ENCODE measurements at regions of chr7 and their contacts with region 1.

Region 1: DNA sequence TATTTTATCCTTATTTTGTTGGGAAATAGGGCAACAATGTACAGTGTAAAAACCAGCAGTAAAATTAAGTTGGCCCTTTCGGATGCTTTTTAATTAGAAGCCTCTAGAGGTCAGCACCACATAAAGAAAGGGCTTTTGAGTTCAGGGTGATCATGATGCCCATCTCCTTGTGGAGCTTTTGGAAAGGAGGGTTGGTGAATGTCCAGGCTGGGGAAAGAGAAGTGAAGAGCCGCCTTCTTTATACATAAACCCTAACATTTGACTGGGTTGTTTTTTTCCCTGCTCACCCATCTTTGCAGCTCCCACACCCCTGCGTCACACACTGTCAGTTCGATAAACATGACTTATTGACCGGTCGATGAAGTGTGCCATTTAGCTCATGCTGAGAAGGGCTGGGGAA is 29.8 kb downstream of the MTURN start:
- DNase-seq: peak in 1 of 2 donors; percentile 77
- H3K4me3 ChIP-seq: no peak overlapping the region
- H3K27ac ChIP-seq: peak overlapping the region in 2 of 5 donors; percentile 44 to 66
- H3K4me1 ChIP-seq: peaks cover 23 to 61% (median 48%) of the 10 kb centered on the region in 4 donors
- H3K27me3 ChIP-seq: no peaks in the 10 kb centered on the region
- CTCF ChIP-seq: peak in 4 of 7 experiments; percentile 39 to 58 (median 50)
- EP300 ChIP-seq: no peak
- POLR2A ChIP-seq: no peak

Region 2: GRCh38 chr7:30080818-30081217 is 83.7 kb before region 1 on chr7:
- intact Hi-C with region 1: no loop called
- DNase-seq: no peak
- H3K4me3 ChIP-seq: no peak overlapping the region
- H3K27ac ChIP-seq: no peak overlapping the region
- H3K4me1 ChIP-seq: peaks cover 0 to 8% (median 3%) of the 10 kb centered on the region in 4 donors
- H3K27me3 ChIP-seq: no peaks in the 10 kb centered on the region
- CTCF ChIP-seq: no peak
- EP300 ChIP-seq: no peak
- POLR2A ChIP-seq: no peak

Region 3: DNA sequence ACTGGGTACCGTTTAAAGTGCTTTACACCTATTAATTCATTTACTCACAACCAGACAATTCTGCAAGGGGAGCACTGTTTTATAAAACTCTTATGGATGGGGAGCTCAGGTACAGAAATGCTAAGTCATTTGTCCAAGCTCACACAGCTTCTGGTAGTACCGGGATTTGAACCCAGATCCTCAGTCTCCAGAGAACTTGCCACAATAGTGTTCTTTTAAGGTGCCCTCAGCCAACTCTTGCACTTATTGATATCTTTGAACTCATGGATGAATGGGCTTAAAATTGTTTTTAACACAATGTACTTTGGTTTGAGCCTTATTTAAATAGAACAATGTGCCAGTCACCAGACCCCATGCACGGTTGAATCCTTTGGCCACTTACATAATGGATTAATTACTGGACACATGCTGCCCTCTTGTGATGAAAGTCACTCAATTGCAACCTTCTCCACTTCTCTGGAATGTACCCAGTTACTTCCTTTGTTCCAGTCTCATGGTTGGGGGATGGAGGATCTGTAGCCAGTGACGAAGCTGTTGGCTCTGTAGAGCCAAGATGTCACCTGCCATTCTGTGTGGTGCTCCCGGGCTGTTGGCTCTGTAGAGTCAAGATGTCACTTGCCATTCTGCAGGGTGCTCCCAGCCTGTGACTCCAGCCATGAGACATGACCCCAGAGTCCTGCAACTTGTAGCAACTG is 248.4 kb after region 1 on chr7:
- intact Hi-C with region 1: loop called (anchors 10 kb)
- DNase-seq: peak; percentile 43 to 83
- H3K4me3 ChIP-seq: no peak overlapping the region
- H3K27ac ChIP-seq: no peak overlapping the region
- H3K4me1 ChIP-seq: peaks cover 0 to 9% (median 3%) of the 10 kb centered on the region in 4 donors
- H3K27me3 ChIP-seq: no peaks in the 10 kb centered on the region
- CTCF ChIP-seq: peak in 5 of 7 experiments; percentile 28 to 83 (median 54)
- EP300 ChIP-seq: no peak
- POLR2A ChIP-seq: no peak

Measured in stomach (tissue), 19 donors.